ENCODE measurements at regions of chr15 and their contacts with region 1.

Region 1: DNA sequence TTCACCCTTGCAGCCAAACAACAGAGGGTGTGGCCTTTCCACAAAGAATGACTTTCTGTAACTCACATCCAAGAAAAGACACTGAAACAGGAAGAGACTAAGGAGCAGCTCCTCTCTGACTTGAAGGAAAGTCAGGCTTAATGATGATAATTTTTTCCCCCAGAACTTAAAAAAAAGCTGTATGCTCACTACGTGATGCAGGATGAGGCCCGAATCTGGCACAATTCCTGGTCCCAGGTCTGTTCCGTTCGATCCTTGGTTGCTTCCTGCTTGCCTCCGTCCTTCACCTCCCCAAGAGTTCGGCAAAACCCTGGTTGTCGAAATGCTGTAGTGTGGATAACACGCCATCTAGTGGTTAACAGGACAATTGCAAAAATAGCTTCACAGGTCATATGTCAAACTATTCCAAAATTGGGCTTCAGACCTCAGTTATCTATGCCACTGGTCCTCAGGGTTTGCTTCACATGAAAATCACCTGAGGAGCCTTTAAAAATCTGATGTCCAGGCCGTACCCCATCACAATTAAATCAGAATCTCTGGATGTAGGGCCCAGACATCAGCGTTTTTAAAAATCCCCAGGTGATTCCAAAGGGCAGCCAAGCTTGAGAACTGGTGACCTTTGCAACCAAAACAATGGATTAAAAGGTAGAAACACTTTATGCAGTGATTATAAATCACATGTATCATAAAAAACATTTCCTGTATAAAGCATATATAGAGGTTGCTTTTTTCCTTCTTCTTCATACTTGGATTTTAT is 28.1 kb upstream of the SYNM start:
- DNase-seq: peak; percentile 28
- H3K4me3 ChIP-seq: peak overlapping the region; percentile 41
- CTCF ChIP-seq: peak; percentile 73

Region 2: GRCh38 chr15:98442379-98442833 is 634.3 kb before region 1 on chr15:
- CTCF ChIA-PET with region 1: interaction called, 54 read pairs
- POLR2A ChIA-PET with region 1: no interaction called
- DNase-seq: peak; percentile 34
- H3K4me3 ChIP-seq: no peak overlapping the region
- CTCF ChIP-seq: peak; percentile 84

Region 3: GRCh38 chr15:98503970-98504369 is 572.8 kb before region 1 on chr15:
- CTCF ChIA-PET with region 1: no interaction called
- POLR2A ChIA-PET with region 1: no interaction called
- DNase-seq: no peak
- H3K4me3 ChIP-seq: no peak overlapping the region
- CTCF ChIP-seq: no peak

Region 4: GRCh38 chr15:98904544-98904943 is 172.2 kb before region 1 on chr15:
- CTCF ChIA-PET with region 1: interaction called, 12 read pairs
- POLR2A ChIA-PET with region 1: no interaction called
- DNase-seq: no peak
- H3K4me3 ChIP-seq: no peak overlapping the region
- CTCF ChIP-seq: peak; percentile 71

Region 5: DNA sequence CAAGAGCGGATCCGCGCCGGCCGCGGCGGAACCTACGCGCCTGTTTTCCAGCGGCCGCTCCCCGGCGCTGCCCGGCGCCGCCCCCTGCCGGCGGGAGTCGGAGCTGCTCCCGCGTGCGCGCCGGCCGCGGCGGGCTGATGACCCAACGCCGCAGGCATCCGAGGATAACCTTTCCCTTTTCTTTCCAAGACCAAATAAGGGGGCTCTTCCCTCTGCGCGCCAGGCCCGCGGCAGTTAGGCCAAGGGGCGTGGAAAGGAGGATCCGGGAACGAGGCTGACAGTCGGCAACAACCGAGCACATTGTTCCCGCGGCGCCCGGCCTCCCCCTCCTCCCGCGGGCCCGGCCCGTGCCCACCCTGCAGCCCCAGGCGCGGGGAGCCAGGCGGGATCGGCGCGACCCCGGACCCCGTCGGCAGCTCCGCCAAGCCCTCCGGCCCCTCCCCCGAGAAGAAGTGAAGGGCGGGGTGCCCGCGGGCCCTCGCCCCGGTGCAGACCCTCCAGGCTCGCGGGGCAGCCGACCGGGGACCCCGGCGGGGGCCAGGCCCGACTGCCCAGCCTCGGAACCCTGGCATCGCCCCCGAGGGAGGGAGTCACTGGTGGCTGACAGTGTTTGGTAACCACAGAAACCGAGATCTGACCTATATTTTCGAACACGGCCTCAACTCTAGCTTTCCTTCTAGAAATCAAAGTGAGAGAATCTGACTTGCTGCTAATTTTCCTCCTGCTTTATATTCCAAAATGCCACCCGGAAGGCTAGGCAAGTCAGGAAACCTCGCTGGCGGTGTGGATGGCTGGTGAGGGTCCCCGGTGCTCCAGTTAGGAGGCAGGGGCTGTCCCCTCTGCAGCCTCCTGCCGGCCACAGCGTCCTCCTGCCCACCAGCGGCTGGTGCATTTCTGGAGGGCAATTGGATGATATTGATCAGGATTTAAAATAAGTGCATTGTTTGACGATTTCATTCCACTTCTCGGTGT is 17.4 kb before region 1 on chr15:
- CTCF ChIA-PET with region 1: interaction called, 101 read pairs
- POLR2A ChIA-PET with region 1: no interaction called
- DNase-seq: peak; percentile 46
- H3K4me3 ChIP-seq: peak overlapping the region; percentile 50
- CTCF ChIP-seq: peak; percentile 59

Region 6: DNA sequence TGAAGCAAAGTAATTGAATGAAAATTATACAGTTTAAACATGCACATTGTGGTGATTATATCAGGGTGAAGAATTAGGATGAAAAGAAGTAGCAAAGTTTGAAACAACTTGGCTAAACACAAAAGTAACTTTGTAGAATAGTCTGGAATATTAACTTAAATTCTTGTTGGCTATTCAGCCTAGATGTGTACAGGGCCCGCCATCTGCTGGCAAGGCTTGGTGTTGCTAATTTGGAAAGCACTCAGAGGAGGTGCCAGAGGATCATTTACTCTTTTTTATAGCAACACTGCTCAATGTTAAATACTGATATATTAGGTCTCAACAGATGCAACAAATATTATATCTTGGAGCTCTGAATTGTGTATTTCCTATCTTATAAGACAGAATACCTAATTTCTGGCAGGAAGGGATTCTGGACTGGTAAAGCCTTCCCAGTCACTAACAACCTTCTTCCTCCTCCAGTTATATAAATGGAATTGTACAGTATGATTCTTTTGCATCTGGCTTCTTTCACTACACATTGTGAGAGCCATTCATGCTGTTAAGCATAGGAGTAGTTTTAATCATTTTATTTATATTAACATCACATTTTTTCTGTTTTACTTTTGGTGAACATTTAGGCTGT is 136.6 kb after region 1 on chr15:
- CTCF ChIA-PET with region 1: interaction called, 13 read pairs
- POLR2A ChIA-PET with region 1: no interaction called
- DNase-seq: peak; percentile 26
- H3K4me3 ChIP-seq: no peak overlapping the region
- CTCF ChIP-seq: peak; percentile 74